ENCODE measurements at regions of chr16 and their contacts with region 1.

Region 1: GRCh38 chr16:80006241-80007215 is 406.0 kb upstream of the MAF start:
- DNase-seq: peak in 1 of 2 experiments; percentile 28
- H3K4me3 ChIP-seq: no peak overlapping the region
- H3K4me3 Mint-ChIP-seq: peak overlapping the region; percentile 34
- H3K27ac Mint-ChIP-seq: peak overlapping the region; percentile 81
- H3K4me1 ChIP-seq: peaks cover 23% of the 10 kb centered on the region
- H3K4me1 Mint-ChIP-seq: peaks cover 24% of the 10 kb centered on the region
- H3K27me3 ChIP-seq: no peaks in the 10 kb centered on the region
- H3K27me3 Mint-ChIP-seq: no peaks in the 10 kb centered on the region
- CTCF ChIP-seq: no peak

Region 2: DNA sequence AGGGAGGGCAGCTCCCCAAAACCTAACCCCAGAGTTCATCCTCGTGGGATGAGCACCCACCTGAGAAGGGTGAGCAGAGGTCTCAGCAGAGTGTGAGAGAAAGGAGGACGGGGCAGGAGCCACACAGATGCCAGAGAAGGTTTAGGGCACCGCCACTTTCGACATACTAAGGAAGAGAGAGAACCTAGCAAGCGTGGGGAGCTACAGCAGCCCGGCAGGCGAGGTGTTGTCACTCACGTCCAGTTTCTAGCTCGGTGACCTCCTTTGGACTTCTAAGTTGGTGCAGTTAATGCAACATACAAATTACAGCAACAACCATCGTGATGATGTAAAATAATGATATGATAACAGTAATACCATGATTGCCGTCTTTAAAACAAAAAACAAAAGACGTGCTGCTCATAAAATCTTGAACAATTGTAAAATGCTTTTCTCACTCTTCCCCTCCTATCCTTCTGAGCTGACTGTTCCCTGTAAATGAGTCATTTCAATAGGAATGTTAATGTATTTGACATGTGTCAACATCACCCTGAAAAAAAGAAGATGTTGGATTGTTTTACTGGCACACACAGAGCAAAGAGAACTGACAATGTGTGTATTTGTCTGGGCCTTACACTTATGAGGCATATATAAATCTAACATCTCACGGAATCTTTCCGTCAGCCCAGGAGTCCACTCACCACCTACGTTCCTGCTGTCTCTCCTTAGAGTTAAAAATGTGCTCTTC is 247.8 kb before region 1 on chr16:
- CTCF ChIA-PET with region 1: no interaction called
- POLR2A ChIA-PET with region 1: no interaction called
- intact Hi-C with region 1: loop called (anchors 5 kb)
- DNase-seq: peak in 1 of 2 experiments; percentile 55
- H3K4me3 ChIP-seq: no peak overlapping the region
- H3K4me3 Mint-ChIP-seq: peak overlapping the region; percentile 20
- H3K27ac Mint-ChIP-seq: peak overlapping the region; percentile 61
- H3K4me1 ChIP-seq: peaks cover 37% of the 10 kb centered on the region
- H3K4me1 Mint-ChIP-seq: peaks cover 55% of the 10 kb centered on the region
- H3K27me3 ChIP-seq: no peaks in the 10 kb centered on the region
- H3K27me3 Mint-ChIP-seq: no peaks in the 10 kb centered on the region
- CTCF ChIP-seq: no peak

Region 3: DNA sequence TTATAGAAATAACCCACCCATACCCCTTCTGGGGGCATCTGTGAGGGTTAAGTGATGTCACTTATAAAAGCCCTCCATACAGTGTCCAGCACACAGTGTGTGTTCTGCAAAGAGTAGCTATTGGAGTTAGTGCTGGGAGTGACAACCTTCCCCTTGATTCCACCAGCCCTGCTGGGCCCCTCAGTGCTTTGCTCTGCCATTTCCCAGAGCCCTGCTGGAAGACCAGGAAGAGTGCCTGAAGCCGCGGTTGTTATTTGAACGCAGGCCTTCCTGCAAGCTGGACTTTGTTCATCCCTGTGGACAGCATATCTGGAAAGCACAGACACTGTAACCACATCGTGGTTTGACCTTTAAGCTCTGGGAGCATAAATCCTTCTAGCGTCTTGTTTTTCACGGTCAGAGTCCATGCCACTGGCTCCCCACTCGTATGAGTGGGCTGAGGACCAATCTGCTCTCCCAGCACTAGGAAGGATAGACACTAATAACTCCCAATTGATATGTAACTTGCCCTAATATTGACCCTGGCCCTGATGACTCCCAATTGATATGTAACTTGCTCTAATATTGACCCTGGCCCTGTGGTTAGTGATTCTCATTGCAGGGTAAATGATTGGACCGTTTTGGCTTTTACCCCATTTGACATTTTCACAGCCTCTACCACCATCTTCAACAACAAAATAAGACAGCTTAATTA is 108.9 kb before region 1 on chr16:
- CTCF ChIA-PET with region 1: no interaction called
- POLR2A ChIA-PET with region 1: no interaction called
- intact Hi-C with region 1: loop called (anchors 1 kb)
- DNase-seq: peak; percentile 65 to 87
- H3K4me3 ChIP-seq: no peak overlapping the region
- H3K4me3 Mint-ChIP-seq: peak overlapping the region; percentile 2
- H3K27ac Mint-ChIP-seq: peak overlapping the region; percentile 39
- H3K4me1 ChIP-seq: peaks cover 53% of the 10 kb centered on the region
- H3K4me1 Mint-ChIP-seq: peaks cover 46% of the 10 kb centered on the region
- H3K27me3 ChIP-seq: no peaks in the 10 kb centered on the region
- H3K27me3 Mint-ChIP-seq: no peaks in the 10 kb centered on the region
- CTCF ChIP-seq: no peak

Region 4: GRCh38 chr16:79988721-79989215 is 17.8 kb before region 1 on chr16:
- CTCF ChIA-PET with region 1: interaction called, 3 read pairs
- POLR2A ChIA-PET with region 1: interaction called, 7 read pairs
- intact Hi-C with region 1: loop called (anchors 1 kb)
- DNase-seq: peak; percentile 54 to 76
- H3K4me3 ChIP-seq: no peak overlapping the region
- H3K4me3 Mint-ChIP-seq: peak overlapping the region; percentile 25
- H3K27ac Mint-ChIP-seq: peak overlapping the region; percentile 87
- H3K4me1 ChIP-seq: peaks cover 33% of the 10 kb centered on the region
- H3K4me1 Mint-ChIP-seq: peaks cover 34% of the 10 kb centered on the region
- H3K27me3 ChIP-seq: no peaks in the 10 kb centered on the region
- H3K27me3 Mint-ChIP-seq: no peaks in the 10 kb centered on the region
- CTCF ChIP-seq: no peak

Region 5: DNA sequence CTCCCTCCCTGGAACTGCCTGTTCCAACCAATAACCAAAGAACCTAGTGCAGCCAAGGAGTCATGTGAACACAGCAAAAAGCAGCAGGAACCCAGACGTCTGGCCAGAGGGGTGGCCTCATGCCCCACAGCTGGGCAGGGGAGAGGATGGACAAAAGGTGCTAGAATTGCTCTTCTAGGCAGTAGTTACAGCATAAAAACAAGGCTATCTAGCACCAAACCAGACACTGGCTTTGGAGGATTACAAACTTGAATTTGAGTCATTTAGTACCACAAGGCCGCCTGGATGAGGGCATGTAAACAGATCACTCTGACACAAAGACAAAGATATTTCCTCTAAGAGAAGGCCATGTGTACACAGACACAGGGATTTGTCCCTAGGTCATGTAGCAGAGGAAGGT is 17.3 kb after region 1 on chr16:
- CTCF ChIA-PET with region 1: interaction called, 7 read pairs
- POLR2A ChIA-PET with region 1: no interaction called
- intact Hi-C with region 1: loop called (anchors 1 kb)
- DNase-seq: peak in 1 of 2 experiments; percentile 11
- H3K4me3 ChIP-seq: no peak overlapping the region
- H3K4me3 Mint-ChIP-seq: no peak overlapping the region
- H3K27ac Mint-ChIP-seq: no peak overlapping the region
- H3K4me1 ChIP-seq: peaks cover 17% of the 10 kb centered on the region
- H3K4me1 Mint-ChIP-seq: peaks cover 27% of the 10 kb centered on the region
- H3K27me3 ChIP-seq: no peaks in the 10 kb centered on the region
- H3K27me3 Mint-ChIP-seq: no peaks in the 10 kb centered on the region
- CTCF ChIP-seq: no peak

Measured in Caco-2 (cell line).